ENCODE measurements at regions of chr5 and their contacts with region 1.

Region 1: GRCh38 chr5:164475339-164475977 is 970.0 kb downstream of the MAT2B start:
- DNase-seq: peak; percentile 70
- H3K4me3 Mint-ChIP-seq: no peak overlapping the region
- H3K27ac Mint-ChIP-seq: no peak overlapping the region
- H3K4me1 Mint-ChIP-seq: no peaks in the 10 kb centered on the region
- H3K27me3 Mint-ChIP-seq: no peaks in the 10 kb centered on the region
- CTCF ChIP-seq: peak; percentile 97

Region 2: DNA sequence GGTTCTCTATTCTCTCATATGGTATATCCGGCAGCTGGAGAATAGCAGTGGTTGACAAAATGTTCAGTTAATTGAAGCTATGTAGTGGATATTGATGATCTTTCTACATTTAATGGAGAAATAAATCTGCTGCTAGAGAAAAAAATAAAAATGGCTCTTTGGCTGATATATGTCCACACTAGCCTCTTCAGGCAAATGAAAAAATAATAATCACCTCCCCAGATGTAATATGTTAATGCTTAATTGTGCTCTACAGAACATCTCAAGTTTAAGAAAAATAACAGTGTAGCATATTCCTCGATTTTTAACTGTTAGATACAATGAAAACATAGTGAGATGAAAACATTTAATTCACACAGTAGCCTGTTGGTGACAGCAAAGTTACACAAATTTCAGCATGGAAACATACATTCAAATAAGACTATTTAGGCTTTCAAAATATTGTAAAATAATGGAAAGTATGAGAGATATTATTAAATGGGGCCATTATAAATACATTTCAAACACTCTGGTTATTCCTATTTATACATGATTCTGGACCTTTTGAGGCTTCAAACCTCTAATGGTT is 427.0 kb before region 1 on chr5:
- CTCF ChIA-PET with region 1: interaction called, 17 read pairs
- POLR2A ChIA-PET with region 1: interaction called, 4 read pairs
- intact Hi-C with region 1: loop called (anchors 1 kb)
- DNase-seq: peak; percentile 45
- H3K4me3 Mint-ChIP-seq: no peak overlapping the region
- H3K27ac Mint-ChIP-seq: no peak overlapping the region
- H3K4me1 Mint-ChIP-seq: no peaks in the 10 kb centered on the region
- H3K27me3 Mint-ChIP-seq: no peaks in the 10 kb centered on the region
- CTCF ChIP-seq: peak; percentile 61

Region 3: GRCh38 chr5:164153469-164154172 is 321.8 kb before region 1 on chr5:
- CTCF ChIA-PET with region 1: interaction called, 3 read pairs
- POLR2A ChIA-PET with region 1: no interaction called
- intact Hi-C with region 1: loop called (anchors 1 kb)
- DNase-seq: no peak
- H3K4me3 Mint-ChIP-seq: no peak overlapping the region
- H3K27ac Mint-ChIP-seq: no peak overlapping the region
- H3K4me1 Mint-ChIP-seq: no peaks in the 10 kb centered on the region
- H3K27me3 Mint-ChIP-seq: no peaks in the 10 kb centered on the region
- CTCF ChIP-seq: no peak

Region 4: DNA sequence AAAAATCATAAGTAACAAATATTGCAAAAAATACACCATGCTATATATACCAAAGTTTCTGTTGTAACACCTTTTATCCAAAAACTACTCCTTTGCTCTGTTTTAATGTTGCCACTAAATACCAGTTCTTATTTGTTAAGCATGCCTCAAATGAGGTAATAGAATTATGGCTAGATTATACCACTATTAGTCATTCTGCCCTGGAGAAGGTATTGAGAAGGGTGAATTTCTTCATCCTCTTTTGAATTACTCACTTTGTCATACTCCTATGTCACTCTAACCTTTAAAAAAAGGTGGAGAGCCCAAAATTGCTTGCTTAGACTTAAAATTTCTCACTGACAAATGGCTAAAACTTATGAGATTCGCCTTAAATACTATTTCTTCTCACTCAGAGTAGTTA is 219.1 kb before region 1 on chr5:
- CTCF ChIA-PET with region 1: no interaction called
- POLR2A ChIA-PET with region 1: no interaction called
- intact Hi-C with region 1: no loop called
- DNase-seq: peak; percentile 63
- H3K4me3 Mint-ChIP-seq: no peak overlapping the region
- H3K27ac Mint-ChIP-seq: no peak overlapping the region
- H3K4me1 Mint-ChIP-seq: no peaks in the 10 kb centered on the region
- H3K27me3 Mint-ChIP-seq: no peaks in the 10 kb centered on the region
- CTCF ChIP-seq: no peak

Region 5: DNA sequence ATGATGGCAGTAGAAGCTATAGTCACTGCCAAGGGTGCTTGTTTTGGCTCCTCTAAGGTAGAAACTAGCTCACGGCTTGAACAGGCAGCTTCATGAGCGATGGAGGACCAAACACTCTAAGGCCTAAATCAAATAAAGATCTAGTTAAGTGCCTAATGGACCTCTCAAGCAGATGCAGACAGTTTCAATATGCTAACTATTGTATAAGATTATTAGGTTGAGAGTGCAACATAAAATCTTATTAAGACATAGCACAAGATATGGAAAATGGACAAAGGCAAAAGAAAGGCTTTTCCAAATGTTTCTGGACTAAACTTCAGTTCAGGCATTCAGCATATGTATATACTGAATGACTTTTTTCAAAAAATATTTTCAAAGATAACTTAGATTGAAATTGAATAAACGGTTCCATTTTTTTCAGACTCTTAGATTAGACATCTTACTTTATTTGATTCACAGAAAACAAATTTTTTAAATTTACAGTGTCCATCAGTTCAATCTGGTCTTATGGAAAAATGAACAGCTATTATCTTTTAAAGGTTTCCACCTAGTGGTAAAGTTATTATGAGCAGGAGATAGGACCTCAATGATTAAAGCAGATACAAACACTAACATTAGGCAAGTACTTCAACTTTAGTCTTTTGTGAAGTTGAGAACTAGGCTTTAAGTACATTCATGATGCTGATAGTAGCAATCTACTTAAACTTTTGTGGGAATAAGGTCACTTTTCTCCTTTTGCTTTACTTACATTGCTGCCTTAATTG is 197.7 kb after region 1 on chr5:
- CTCF ChIA-PET with region 1: interaction called, 19 read pairs
- POLR2A ChIA-PET with region 1: no interaction called
- intact Hi-C with region 1: no loop called
- DNase-seq: peak; percentile 42
- H3K4me3 Mint-ChIP-seq: no peak overlapping the region
- H3K27ac Mint-ChIP-seq: no peak overlapping the region
- H3K4me1 Mint-ChIP-seq: no peaks in the 10 kb centered on the region
- H3K27me3 Mint-ChIP-seq: no peaks in the 10 kb centered on the region
- CTCF ChIP-seq: peak; percentile 54